ENCODE measurements at regions of chr4 and their contacts with region 1.

Region 1: GRCh38 chr4:81635739-81636138 is 164.0 kb upstream of the RASGEF1B start:
- DNase-seq: peak; percentile 87
- ATAC-seq: peak; percentile 76
- H3K4me3 ChIP-seq: peak overlapping the region in 2 of 5 experiments; percentile 4 to 13
- H3K4me3 Mint-ChIP-seq: peak overlapping the region; percentile 83
- H3K27ac ChIP-seq: peak overlapping the region; percentile 17 to 51
- H3K27ac Mint-ChIP-seq: peak overlapping the region; percentile 91
- H3K4me1 ChIP-seq: peaks cover 33 to 34% of the 10 kb centered on the region in 2 donors
- H3K4me1 Mint-ChIP-seq: peaks cover 55% of the 10 kb centered on the region
- H3K27me3 ChIP-seq: no peaks in the 10 kb centered on the region
- H3K27me3 Mint-ChIP-seq: no peaks in the 10 kb centered on the region
- CTCF ChIP-seq: no peak

Region 2: GRCh38 chr4:81494031-81494431 is 141.7 kb before region 1 on chr4:
- CTCF ChIA-PET with region 1: no interaction called
- POLR2A ChIA-PET with region 1: no interaction called
- intact Hi-C with region 1: loop called (anchors 1 kb)
- DNase-seq: peak; percentile 76
- ATAC-seq: peak; percentile 37
- H3K4me3 ChIP-seq: peak overlapping the region in 2 of 5 experiments; percentile 1 to 50
- H3K4me3 Mint-ChIP-seq: peak overlapping the region; percentile 76
- H3K27ac ChIP-seq: peak overlapping the region; percentile 59 to 80
- H3K27ac Mint-ChIP-seq: peak overlapping the region; percentile 85
- H3K4me1 ChIP-seq: peaks cover 43 to 54% of the 10 kb centered on the region in 2 donors
- H3K4me1 Mint-ChIP-seq: peaks cover 49% of the 10 kb centered on the region
- H3K27me3 ChIP-seq: no peaks in the 10 kb centered on the region
- H3K27me3 Mint-ChIP-seq: no peaks in the 10 kb centered on the region
- CTCF ChIP-seq: no peak

Region 3: GRCh38 chr4:81621490-81621889 is 14.2 kb before region 1 on chr4:
- CTCF ChIA-PET with region 1: interaction called, 4 read pairs
- POLR2A ChIA-PET with region 1: no interaction called
- intact Hi-C with region 1: loop called (anchors 2 kb)
- DNase-seq: no peak
- ATAC-seq: peak; percentile 17
- H3K4me3 ChIP-seq: no peak overlapping the region
- H3K4me3 Mint-ChIP-seq: no peak overlapping the region
- H3K27ac ChIP-seq: no peak overlapping the region
- H3K27ac Mint-ChIP-seq: no peak overlapping the region
- H3K4me1 ChIP-seq: peaks cover 19 to 20% of the 10 kb centered on the region in 2 donors
- H3K4me1 Mint-ChIP-seq: peaks cover 34% of the 10 kb centered on the region
- H3K27me3 ChIP-seq: no peaks in the 10 kb centered on the region
- H3K27me3 Mint-ChIP-seq: no peaks in the 10 kb centered on the region
- CTCF ChIP-seq: no peak

Region 4: DNA sequence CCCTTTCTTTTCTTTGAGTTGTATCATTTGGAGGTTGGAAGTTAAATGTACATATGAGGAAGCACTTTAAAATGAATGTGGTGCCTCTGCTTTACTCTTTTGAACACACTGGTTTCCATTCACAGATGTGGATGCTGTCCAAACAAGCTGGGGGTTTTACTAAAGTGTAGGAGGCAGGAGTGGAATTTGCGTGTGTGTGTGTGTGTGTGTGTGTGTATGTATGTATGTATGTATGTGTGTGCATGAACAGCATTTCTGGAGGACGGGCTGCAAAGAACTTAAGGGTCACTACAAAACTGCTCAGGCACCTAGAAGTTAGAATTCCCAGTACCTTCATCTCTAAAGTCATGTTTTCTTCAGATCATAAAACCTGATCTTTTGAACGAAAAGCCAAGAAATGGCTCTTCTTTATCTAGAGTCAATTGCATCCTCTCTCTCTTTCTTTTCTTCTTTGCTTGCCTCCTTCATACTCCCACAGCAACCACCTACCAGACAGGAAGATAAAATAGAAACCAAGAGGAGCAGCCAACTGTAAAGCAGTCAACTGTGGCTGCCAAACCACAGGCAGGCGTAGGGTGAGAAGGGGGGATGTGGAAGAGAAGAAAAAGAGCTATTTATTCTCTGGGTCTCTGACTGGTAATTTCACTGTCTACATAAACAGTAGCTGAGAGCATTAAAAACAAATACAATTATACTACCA is 13.0 kb after region 1 on chr4:
- CTCF ChIA-PET with region 1: interaction called, 4 read pairs
- POLR2A ChIA-PET with region 1: no interaction called
- intact Hi-C with region 1: loop called (anchors 2 kb)
- DNase-seq: peak; percentile 69
- ATAC-seq: peak; percentile 86
- H3K4me3 ChIP-seq: peak overlapping the region in 2 of 5 experiments; percentile 5 to 24
- H3K4me3 Mint-ChIP-seq: peak overlapping the region; percentile 66
- H3K27ac ChIP-seq: no peak overlapping the region
- H3K27ac Mint-ChIP-seq: peak overlapping the region; percentile 16
- H3K4me1 ChIP-seq: peaks cover 26 to 36% of the 10 kb centered on the region in 2 donors
- H3K4me1 Mint-ChIP-seq: peaks cover 46% of the 10 kb centered on the region
- H3K27me3 ChIP-seq: no peaks in the 10 kb centered on the region
- H3K27me3 Mint-ChIP-seq: no peaks in the 10 kb centered on the region
- CTCF ChIP-seq: no peak